CD8-positive, alpha-beta T cell (primary cell): ENCODE measurements at regions of chr11 and their contacts with region 1.

Region 1: GRCh38 chr11:129895126-129896041 is at the start of gene NFRKB:
- DNase-seq: peak; percentile 76 to 94 (median 86)
- ATAC-seq: peak; percentile 96
- H3K4me3 ChIP-seq: peak within 1 kb of the TSS; percentile 72 to 90
- H3K4me3 Mint-ChIP-seq: peak within 1 kb of the TSS; percentile 92
- H3K27ac ChIP-seq: peak within 1 kb of the TSS; percentile 45 to 53
- H3K27ac Mint-ChIP-seq: peak within 1 kb of the TSS; percentile 90
- H3K4me1 ChIP-seq: peaks cover 19% of the 10 kb centered on the region
- H3K4me1 Mint-ChIP-seq: peaks cover 43% of the 10 kb centered on the region
- H3K27me3 ChIP-seq: no peaks in the 10 kb centered on the region
- H3K27me3 Mint-ChIP-seq: no peaks in the 10 kb centered on the region
- CTCF ChIP-seq: no peak
- total RNA-seq, gene NFRKB: 38.8 to 39.4 TPM

Region 2: GRCh38 chr11:129279326-129280026 is 615.9 kb before region 1 on chr11:
- CTCF ChIA-PET with region 1: no interaction called
- POLR2A ChIA-PET with region 1: no interaction called
- intact Hi-C with region 1: loop called in 1 of 2 experiments (anchors 5 kb)
- DNase-seq: peak; percentile 48 to 88 (median 75)
- ATAC-seq: peak; percentile 78
- H3K4me3 ChIP-seq: peak overlapping the region; percentile 62 to 64
- H3K4me3 Mint-ChIP-seq: peak overlapping the region; percentile 72
- H3K27ac ChIP-seq: peak overlapping the region in 1 of 2 experiments; percentile 46
- H3K27ac Mint-ChIP-seq: peak overlapping the region; percentile 49
- H3K4me1 ChIP-seq: peaks cover 14% of the 10 kb centered on the region
- H3K4me1 Mint-ChIP-seq: peaks cover 29% of the 10 kb centered on the region
- H3K27me3 ChIP-seq: peaks cover 0 to 5% of the 10 kb centered on the region in 2 experiments
- H3K27me3 Mint-ChIP-seq: peaks cover 15% of the 10 kb centered on the region
- CTCF ChIP-seq: no peak

Region 3: GRCh38 chr11:129853518-129854236 is 41.7 kb before region 1 on chr11:
- CTCF ChIA-PET with region 1: no interaction called
- POLR2A ChIA-PET with region 1: interaction called, 4 read pairs
- intact Hi-C with region 1: loop called in 1 of 2 experiments (anchors 5 kb)
- DNase-seq: peak; percentile 51 to 90 (median 74)
- ATAC-seq: peak; percentile 94
- H3K4me3 ChIP-seq: no peak overlapping the region
- H3K4me3 Mint-ChIP-seq: peak overlapping the region; percentile 71
- H3K27ac ChIP-seq: peak overlapping the region in 1 of 2 experiments; percentile 44
- H3K27ac Mint-ChIP-seq: peak overlapping the region; percentile 91
- H3K4me1 ChIP-seq: peaks cover 26% of the 10 kb centered on the region
- H3K4me1 Mint-ChIP-seq: peaks cover 40% of the 10 kb centered on the region
- H3K27me3 ChIP-seq: no peaks in the 10 kb centered on the region
- H3K27me3 Mint-ChIP-seq: no peaks in the 10 kb centered on the region
- CTCF ChIP-seq: no peak

Region 4: DNA sequence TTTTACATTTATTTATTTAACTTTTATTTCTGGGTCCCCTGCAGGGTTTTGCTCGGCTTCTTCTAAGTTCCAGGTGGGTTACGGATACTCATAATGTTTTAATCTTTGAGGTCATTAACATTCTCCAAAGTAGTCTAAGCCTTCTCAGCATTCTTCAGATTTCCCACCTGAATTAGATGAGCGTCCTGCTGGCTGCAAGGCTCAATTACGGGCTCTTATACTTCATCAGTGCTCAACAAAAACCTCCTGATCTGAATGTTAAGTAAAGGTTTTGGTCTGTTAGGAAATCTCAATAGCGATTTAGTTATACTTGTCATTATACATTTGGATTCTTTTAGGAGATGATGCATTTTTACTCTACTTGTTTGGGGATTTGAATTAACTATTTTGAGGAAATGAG is 27.3 kb after region 1 on chr11:
- CTCF ChIA-PET with region 1: interaction called, 4 read pairs
- POLR2A ChIA-PET with region 1: no interaction called
- intact Hi-C with region 1: loop called (anchors 1 to 2 kb)
- DNase-seq: no peak
- ATAC-seq: no peak
- H3K4me3 ChIP-seq: no peak overlapping the region
- H3K4me3 Mint-ChIP-seq: no peak overlapping the region
- H3K27ac ChIP-seq: no peak overlapping the region
- H3K27ac Mint-ChIP-seq: no peak overlapping the region
- H3K4me1 ChIP-seq: peaks cover 5% of the 10 kb centered on the region
- H3K4me1 Mint-ChIP-seq: peaks cover 6% of the 10 kb centered on the region
- H3K27me3 ChIP-seq: peaks cover 0 to 3% of the 10 kb centered on the region in 2 experiments
- H3K27me3 Mint-ChIP-seq: no peaks in the 10 kb centered on the region
- CTCF ChIP-seq: no peak

Region 5: GRCh38 chr11:130069684-130070108 is 174.3 kb after region 1 on chr11 and contains the start of gene APLP2:
- CTCF ChIA-PET with region 1: no interaction called
- POLR2A ChIA-PET with region 1: no interaction called
- intact Hi-C with region 1: loop called (anchors 1 kb)
- DNase-seq: peak; percentile 94 to 99 (median 97)
- ATAC-seq: peak; percentile 93
- H3K4me3 ChIP-seq: peak within 1 kb of the TSS; percentile 77 to 88
- H3K4me3 Mint-ChIP-seq: peak within 1 kb of the TSS; percentile 97
- H3K27ac ChIP-seq: peak within 1 kb of the TSS; percentile 74 to 80
- H3K27ac Mint-ChIP-seq: peak within 1 kb of the TSS; percentile 95
- H3K4me1 ChIP-seq: peaks cover 17% of the 10 kb centered on the region
- H3K4me1 Mint-ChIP-seq: peaks cover 18% of the 10 kb centered on the region
- H3K27me3 ChIP-seq: no peaks in the 10 kb centered on the region
- H3K27me3 Mint-ChIP-seq: peaks cover 4% of the 10 kb centered on the region
- CTCF ChIP-seq: no peak
- total RNA-seq, gene APLP2: 23.2 to 24.7 TPM

Region 6: DNA sequence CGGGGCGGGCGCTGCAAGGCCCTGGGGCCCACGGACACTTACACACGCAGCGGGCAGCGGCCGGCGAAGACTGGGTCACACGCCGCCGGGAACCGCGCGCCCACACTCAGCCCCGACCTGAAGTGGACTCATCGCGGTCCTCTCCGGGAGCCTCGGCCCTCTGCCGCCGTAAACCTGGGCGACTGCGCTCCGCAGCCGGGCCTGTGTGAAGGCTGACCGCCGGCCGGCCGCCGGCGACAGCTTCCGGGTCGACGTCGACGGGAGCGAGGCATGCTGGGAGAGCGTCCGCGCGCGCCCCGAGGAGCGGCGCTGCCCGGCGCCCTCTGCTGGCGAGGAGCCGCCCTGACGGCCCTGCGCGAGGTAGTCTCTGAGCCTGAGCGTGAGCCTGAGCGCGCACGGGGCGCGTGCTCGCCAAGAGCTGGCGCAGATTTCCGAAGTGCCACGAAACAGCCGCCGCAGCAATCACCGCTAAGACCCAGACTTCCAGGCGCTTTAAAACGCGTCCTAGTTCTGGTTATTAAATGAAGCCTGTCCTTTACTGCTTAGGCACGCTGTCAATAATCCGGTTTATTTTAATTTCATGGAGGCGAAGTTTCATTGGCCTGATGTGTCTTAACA is 1021.0 kb after region 1 on chr11 and contains the start of gene SNX19:
- CTCF ChIA-PET with region 1: no interaction called
- POLR2A ChIA-PET with region 1: interaction called, 4 read pairs
- intact Hi-C with region 1: loop called in 1 of 2 experiments (anchors 2 kb)
- DNase-seq: peak; percentile 84 to 94 (median 90)
- ATAC-seq: peak; percentile 99
- H3K4me3 ChIP-seq: peak within 1 kb of the TSS; percentile 53 to 69
- H3K4me3 Mint-ChIP-seq: peak within 1 kb of the TSS; percentile 87
- H3K27ac ChIP-seq: peak within 1 kb of the TSS; percentile 74 to 89
- H3K27ac Mint-ChIP-seq: peak within 1 kb of the TSS; percentile 91
- H3K4me1 ChIP-seq: peaks cover 15% of the 10 kb centered on the region
- H3K4me1 Mint-ChIP-seq: peaks cover 34% of the 10 kb centered on the region
- H3K27me3 ChIP-seq: no peaks in the 10 kb centered on the region
- H3K27me3 Mint-ChIP-seq: peaks cover 11% of the 10 kb centered on the region
- CTCF ChIP-seq: peak; percentile 94
- total RNA-seq, gene SNX19: 31.7 to 36.7 TPM